Calu3 (cell line): ENCODE measurements at regions of chr10 and their contacts with region 1.

Region 1: GRCh38 chr10:117339578-117339977 is 35.7 kb downstream of the PDZD8 start:
- DNase-seq: no peak
- H3K4me3 Mint-ChIP-seq: no peak overlapping the region
- H3K27ac Mint-ChIP-seq: no peak overlapping the region
- H3K4me1 Mint-ChIP-seq: peaks cover 45% of the 10 kb centered on the region
- H3K27me3 Mint-ChIP-seq: no peaks in the 10 kb centered on the region
- CTCF ChIP-seq: no peak

Region 2: GRCh38 chr10:117374506-117375359 is 35.2 kb after region 1 on chr10:
- CTCF ChIA-PET with region 1: interaction called, 4 read pairs
- intact Hi-C with region 1: loop called (anchors 5 kb)
- DNase-seq: no peak
- H3K4me3 Mint-ChIP-seq: peak overlapping the region; percentile 92
- H3K27ac Mint-ChIP-seq: peak overlapping the region; percentile 74
- H3K4me1 Mint-ChIP-seq: peaks cover 5% of the 10 kb centered on the region
- H3K27me3 Mint-ChIP-seq: peaks cover 12% of the 10 kb centered on the region
- CTCF ChIP-seq: no peak

Region 3: GRCh38 chr10:117390420-117390819 is 50.8 kb after region 1 on chr10:
- CTCF ChIA-PET with region 1: no interaction called
- intact Hi-C with region 1: no loop called
- DNase-seq: no peak
- H3K4me3 Mint-ChIP-seq: no peak overlapping the region
- H3K27ac Mint-ChIP-seq: no peak overlapping the region
- H3K4me1 Mint-ChIP-seq: no peaks in the 10 kb centered on the region
- H3K27me3 Mint-ChIP-seq: peaks cover 54% of the 10 kb centered on the region
- CTCF ChIP-seq: no peak

Region 4: GRCh38 chr10:117413928-117414618 is 74.5 kb after region 1 on chr10:
- CTCF ChIA-PET with region 1: no interaction called
- intact Hi-C with region 1: no loop called
- DNase-seq: no peak
- H3K4me3 Mint-ChIP-seq: no peak overlapping the region
- H3K27ac Mint-ChIP-seq: no peak overlapping the region
- H3K4me1 Mint-ChIP-seq: peaks cover 9% of the 10 kb centered on the region
- H3K27me3 Mint-ChIP-seq: no peaks in the 10 kb centered on the region
- CTCF ChIP-seq: no peak